GM10248 (cell line): ENCODE measurements at regions of chr18 and their contacts with region 1.

Region 1: GRCh38 chr18:56188529-56189285 is 449.7 kb downstream of the TXNL1 start:
- DNase-seq: no peak
- CTCF ChIP-seq: no peak

Region 2: GRCh38 chr18:55988537-55988936 is 200.2 kb before region 1 on chr18:
- CTCF ChIA-PET with region 1: no interaction called
- POLR2A ChIA-PET with region 1: no interaction called
- DNase-seq: no peak
- CTCF ChIP-seq: no peak

Region 3: DNA sequence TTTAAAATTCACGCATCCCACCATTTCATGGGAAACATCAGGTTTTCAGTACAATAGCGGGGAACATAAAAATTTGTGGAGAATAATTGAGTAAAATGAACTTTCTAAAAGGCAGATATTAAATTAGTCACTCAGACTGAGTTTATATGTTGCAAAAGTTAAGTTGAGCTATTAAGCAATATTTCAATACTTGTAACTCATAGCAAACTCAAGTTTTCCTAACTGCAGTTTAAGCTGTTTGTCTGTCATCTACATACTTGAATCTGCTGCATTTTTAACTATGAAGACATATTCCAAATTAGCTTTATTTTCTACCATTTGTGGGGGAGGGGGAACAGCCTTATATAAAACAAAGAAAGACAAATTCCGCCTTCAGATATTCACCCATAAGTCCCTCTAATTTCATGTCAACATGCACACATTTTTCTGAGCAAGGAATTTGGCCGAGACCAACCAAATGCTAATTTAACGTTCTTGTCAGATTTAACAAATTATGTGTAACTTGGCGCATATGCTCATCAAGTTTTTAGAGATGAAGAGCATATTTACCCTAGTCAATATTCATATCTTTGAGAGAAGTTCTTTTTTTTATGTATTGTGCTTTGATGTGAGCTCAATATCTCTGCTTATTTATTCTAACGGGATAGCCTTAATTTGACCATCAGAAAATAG is 13.2 kb before region 1 on chr18:
- CTCF ChIA-PET with region 1: interaction called, 10 read pairs
- POLR2A ChIA-PET with region 1: no interaction called
- DNase-seq: no peak
- CTCF ChIP-seq: no peak